ENCODE measurements at regions of chr3 and their contacts with region 1.

Region 1: GRCh38 chr3:61060411-61060861 is 190.8 kb downstream of the FHIT start:
- DNase-seq: peak; percentile 44
- ATAC-seq: peak; percentile 93
- H3K4me3 ChIP-seq: no peak overlapping the region
- H3K27ac ChIP-seq: peak overlapping the region; percentile 37
- H3K4me1 ChIP-seq: peaks cover 12% of the 10 kb centered on the region
- H3K27me3 ChIP-seq: no peaks in the 10 kb centered on the region
- CTCF ChIP-seq: no peak
- EP300 ChIP-seq: peak in 1 of 2 experiments; percentile 24; a peak in 1 of 4 replicates
- POLR2A ChIP-seq: no peak
- RAD21 ChIP-seq: no peak

Region 2: GRCh38 chr3:61030469-61031035 is 29.9 kb before region 1 on chr3:
- CTCF ChIA-PET with region 1: no interaction called
- POLR2A ChIA-PET with region 1: no interaction called
- in situ Hi-C with region 1: no loop called
- intact Hi-C with region 1: loop called (anchors 2 kb)
- DNase-seq: peak; percentile 91
- ATAC-seq: peak; percentile 92
- H3K4me3 ChIP-seq: peak overlapping the region in 1 of 3 experiments; percentile 7; a peak in 1 of 6 replicates
- H3K27ac ChIP-seq: peak overlapping the region; percentile 75
- H3K4me1 ChIP-seq: peaks cover 53% of the 10 kb centered on the region
- H3K27me3 ChIP-seq: no peaks in the 10 kb centered on the region
- CTCF ChIP-seq: no peak
- EP300 ChIP-seq: peak; percentile 21 to 71; a peak in 2 of 4 replicates
- POLR2A ChIP-seq: no peak
- RAD21 ChIP-seq: no peak

Measured in HepG2 (cell line).